ENCODE measurements at regions of chr20 and their contacts with region 1.

Region 1: GRCh38 chr20:3000852-3001523 is 42.4 kb upstream of the GNRH2 start:
- H3K4me3 Mint-ChIP-seq: no peak overlapping the region
- H3K27ac Mint-ChIP-seq: no peak overlapping the region
- H3K4me1 Mint-ChIP-seq: no peaks in the 10 kb centered on the region
- H3K27me3 Mint-ChIP-seq: no peaks in the 10 kb centered on the region

Region 2: DNA sequence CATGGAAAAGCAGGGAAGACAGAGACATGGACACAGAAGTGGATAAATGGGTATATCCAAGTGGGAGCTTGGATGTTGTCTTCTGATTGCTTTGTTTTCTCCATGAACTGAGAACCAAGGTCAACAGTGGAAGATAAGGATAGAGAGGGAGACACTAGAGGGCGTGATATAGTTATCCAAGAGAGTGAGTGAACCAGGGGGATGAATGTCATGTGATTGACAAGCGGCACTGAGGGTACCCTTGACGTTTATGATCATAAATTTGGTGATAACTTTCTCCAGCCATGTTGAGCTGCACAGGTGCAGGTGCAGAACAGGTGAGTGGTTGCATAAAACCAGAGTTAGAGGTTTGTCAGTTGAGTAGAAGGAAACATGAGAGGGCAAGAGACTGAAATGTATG is 287.7 kb before region 1 on chr20:
- intact Hi-C with region 1: loop called (anchors 5 kb)
- H3K4me3 Mint-ChIP-seq: no peak overlapping the region
- H3K27ac Mint-ChIP-seq: no peak overlapping the region
- H3K4me1 Mint-ChIP-seq: no peaks in the 10 kb centered on the region
- H3K27me3 Mint-ChIP-seq: peaks cover 8% of the 10 kb centered on the region

Region 3: DNA sequence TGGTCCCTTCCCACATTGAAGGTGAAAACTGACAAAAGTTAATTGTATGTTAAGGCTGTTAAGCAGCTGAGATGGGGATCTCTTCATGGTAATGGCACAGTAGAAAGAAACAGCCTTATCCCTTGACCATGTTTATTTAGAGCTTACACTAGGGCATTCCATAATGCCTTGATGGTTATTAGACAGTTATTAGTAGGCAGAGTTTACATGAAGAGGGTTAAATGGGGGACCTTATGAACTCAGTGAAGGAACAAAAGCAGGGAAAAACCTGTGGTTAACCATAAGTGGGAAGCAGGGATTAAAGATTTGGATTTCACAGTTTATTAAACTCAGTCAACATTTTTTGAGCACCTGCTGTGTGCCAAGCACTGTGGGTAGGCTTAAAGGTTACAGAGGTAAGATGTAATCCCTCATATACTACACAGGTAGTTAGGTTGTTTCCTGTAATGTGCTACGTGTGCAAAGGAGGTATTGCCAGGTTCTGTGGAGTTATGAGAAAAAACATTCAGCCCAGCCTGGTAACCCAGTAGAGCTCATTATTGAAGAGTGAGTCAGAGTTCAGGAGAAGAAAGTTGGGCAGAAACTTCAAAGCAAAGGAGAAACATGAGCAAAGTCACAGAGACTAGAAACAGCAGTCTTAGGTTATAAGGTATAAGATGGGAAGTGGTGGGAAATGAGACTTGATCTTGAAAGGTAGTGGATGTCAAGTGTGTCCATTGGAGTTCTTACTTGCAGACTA is 10.2 kb after region 1 on chr20:
- intact Hi-C with region 1: no loop called
- H3K4me3 Mint-ChIP-seq: no peak overlapping the region
- H3K27ac Mint-ChIP-seq: no peak overlapping the region
- H3K4me1 Mint-ChIP-seq: no peaks in the 10 kb centered on the region
- H3K27me3 Mint-ChIP-seq: no peaks in the 10 kb centered on the region

Measured in dendritic cell treated with granulocyte-macrophage colony-stimulating factor and Interleukin-4, amounts not matched to agents 40 ng/mL and 50 ng/mL, for 4 days (primary cell).